ENCODE measurements at regions of chr3 and their contacts with region 1.

Region 1: GRCh38 chr3:49539659-49540560 is 14.4 kb upstream of the BSN start:
- DNase-seq: peak; percentile 57 to 90
- ATAC-seq: peak; percentile 94 to 97
- H3K4me3 ChIP-seq: peak overlapping the region; percentile 49
- H3K27ac ChIP-seq: peak overlapping the region; percentile 72 to 86
- H3K4me1 ChIP-seq: peaks cover 5% of the 10 kb centered on the region; the same call in 2 of the 3 replicates
- CTCF ChIP-seq: peak; percentile 68
- EP300 ChIP-seq: no peak
- POLR2A ChIP-seq: peak; percentile 50
- RAD21 ChIP-seq: peak; percentile 87 to 93

Region 2: GRCh38 chr3:49469936-49470713 is 69.8 kb before region 1 on chr3 and contains the start of gene DAG1:
- CTCF ChIA-PET with region 1: interaction called, 5 read pairs
- POLR2A ChIA-PET with region 1: interaction called, 10 read pairs
- DNase-seq: peak; percentile 89 to 94
- ATAC-seq: peak; percentile 90
- H3K4me3 ChIP-seq: peak within 1 kb of the TSS; percentile 89
- H3K27ac ChIP-seq: peak within 1 kb of the TSS; percentile 94 to 99
- H3K4me1 ChIP-seq: peaks cover 31% of the 10 kb centered on the region
- CTCF ChIP-seq: no peak
- EP300 ChIP-seq: no peak
- POLR2A ChIP-seq: peak; percentile 52; the same call in 1 of the 2 replicates
- RAD21 ChIP-seq: no peak
- polyA plus RNA-seq, gene DAG1: 46.6 and 70.8 TPM in 2 replicates

Region 3: GRCh38 chr3:49553692-49554632 is 14.1 kb after region 1 on chr3 and contains the start of gene BSN:
- CTCF ChIA-PET with region 1: interaction called, 40 read pairs
- POLR2A ChIA-PET with region 1: interaction called, 8 read pairs
- DNase-seq: peak; percentile 81 to 82
- ATAC-seq: peak; percentile 85 to 87
- H3K4me3 ChIP-seq: peak within 1 kb of the TSS; percentile 67
- H3K27ac ChIP-seq: peak within 1 kb of the TSS; percentile 84 to 94
- H3K4me1 ChIP-seq: peaks cover 8% of the 10 kb centered on the region; the same call in 2 of the 3 replicates
- CTCF ChIP-seq: no peak
- EP300 ChIP-seq: no peak
- POLR2A ChIP-seq: peak; percentile 32; the same call in 1 of the 2 replicates
- RAD21 ChIP-seq: no peak
- polyA plus RNA-seq, gene BSN: 0.04 and 0.05 TPM in 2 replicates

Region 4: GRCh38 chr3:49666592-49666991 is 126.7 kb after region 1 on chr3:
- CTCF ChIA-PET with region 1: interaction called, 210 read pairs
- POLR2A ChIA-PET with region 1: interaction called, 14 read pairs
- DNase-seq: no peak
- ATAC-seq: no peak
- H3K4me3 ChIP-seq: no peak overlapping the region
- H3K27ac ChIP-seq: no peak overlapping the region
- H3K4me1 ChIP-seq: peaks cover 21% of the 10 kb centered on the region
- CTCF ChIP-seq: no peak
- EP300 ChIP-seq: no peak
- POLR2A ChIP-seq: no peak
- RAD21 ChIP-seq: no peak

Region 5: GRCh38 chr3:49683162-49683561 is 143.3 kb after region 1 on chr3:
- CTCF ChIA-PET with region 1: interaction called, 30 read pairs
- POLR2A ChIA-PET with region 1: no interaction called
- DNase-seq: no peak
- ATAC-seq: no peak
- H3K4me3 ChIP-seq: no peak overlapping the region
- H3K27ac ChIP-seq: no peak overlapping the region
- H3K4me1 ChIP-seq: no peaks in the 10 kb centered on the region
- CTCF ChIP-seq: no peak
- EP300 ChIP-seq: no peak
- POLR2A ChIP-seq: no peak
- RAD21 ChIP-seq: no peak